ENCODE measurements at regions of chr20 and their contacts with region 1.

Region 1: GRCh38 chr20:46132705-46133120 is 14.6 kb downstream of the CD40 start:
- DNase-seq: peak; percentile 62
- H3K4me3 Mint-ChIP-seq: no peak overlapping the region
- H3K27ac Mint-ChIP-seq: no peak overlapping the region
- H3K4me1 Mint-ChIP-seq: no peaks in the 10 kb centered on the region
- H3K27me3 Mint-ChIP-seq: peaks cover 23% of the 10 kb centered on the region
- CTCF ChIP-seq: peak; percentile 90

Region 2: GRCh38 chr20:46040902-46041535 is 91.7 kb before region 1 on chr20:
- CTCF ChIA-PET with region 1: no interaction called
- POLR2A ChIA-PET with region 1: no interaction called
- intact Hi-C with region 1: no loop called
- DNase-seq: peak; percentile 57
- H3K4me3 Mint-ChIP-seq: no peak overlapping the region
- H3K27ac Mint-ChIP-seq: no peak overlapping the region
- H3K4me1 Mint-ChIP-seq: no peaks in the 10 kb centered on the region
- H3K27me3 Mint-ChIP-seq: peaks cover 81% of the 10 kb centered on the region
- CTCF ChIP-seq: no peak

Region 3: GRCh38 chr20:46117704-46118467 is 14.8 kb before region 1 on chr20 and contains the start of gene CD40:
- CTCF ChIA-PET with region 1: interaction called, 18 read pairs
- POLR2A ChIA-PET with region 1: no interaction called
- intact Hi-C with region 1: no loop called
- DNase-seq: peak; percentile 66
- H3K4me3 Mint-ChIP-seq: peak within 1 kb of the TSS; percentile 78
- H3K27ac Mint-ChIP-seq: no peak within 1 kb of the TSS
- H3K4me1 Mint-ChIP-seq: peaks cover 7% of the 10 kb centered on the region
- H3K27me3 Mint-ChIP-seq: peaks cover 11% of the 10 kb centered on the region
- CTCF ChIP-seq: no peak
- total RNA-seq, gene CD40: 1.5 and 2.3 TPM in 2 replicates

Region 4: DNA sequence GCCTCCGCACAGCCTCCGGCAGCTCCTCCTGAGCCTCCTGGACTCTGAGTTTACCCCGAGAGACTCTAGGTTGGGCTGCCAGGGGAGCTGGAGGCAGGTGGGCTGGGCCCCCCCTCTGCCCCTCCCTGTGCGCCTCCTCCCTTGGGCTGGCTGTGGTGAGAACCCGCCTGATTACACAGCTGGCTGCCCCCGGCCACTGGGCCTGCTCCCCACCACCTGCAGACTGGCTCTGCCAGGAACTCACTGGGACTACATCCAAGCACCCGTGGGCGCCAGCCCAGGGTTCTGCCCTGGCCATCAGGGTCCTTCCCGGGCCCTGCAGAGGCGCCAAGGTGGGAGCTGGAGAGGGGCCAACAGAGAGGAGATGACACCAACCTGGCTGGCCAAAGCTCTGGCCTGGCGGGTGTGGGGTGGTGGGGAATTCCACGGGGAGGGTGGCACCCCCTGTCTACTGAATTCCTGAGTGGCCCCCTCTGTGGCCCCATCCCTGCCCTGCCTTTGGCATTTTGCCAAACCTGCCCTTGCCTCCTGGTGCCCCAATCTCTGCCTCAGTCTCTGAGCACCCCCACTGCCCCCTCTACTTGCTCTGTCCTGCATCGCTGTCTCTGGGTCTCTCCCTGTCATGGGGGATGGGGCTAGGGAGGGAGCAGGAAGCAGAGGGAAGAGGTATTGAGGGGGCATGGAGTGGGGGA is 197.5 kb after region 1 on chr20:
- CTCF ChIA-PET with region 1: interaction called, 10 read pairs
- POLR2A ChIA-PET with region 1: no interaction called
- intact Hi-C with region 1: loop called (anchors 1 kb)
- DNase-seq: no peak
- H3K4me3 Mint-ChIP-seq: no peak overlapping the region
- H3K27ac Mint-ChIP-seq: no peak overlapping the region
- H3K4me1 Mint-ChIP-seq: peaks cover 17% of the 10 kb centered on the region
- H3K27me3 Mint-ChIP-seq: peaks cover 16% of the 10 kb centered on the region
- CTCF ChIP-seq: no peak

Region 5: GRCh38 chr20:46355778-46356177 is 223.1 kb after region 1 on chr20:
- CTCF ChIA-PET with region 1: interaction called, 17 read pairs
- POLR2A ChIA-PET with region 1: interaction called, 4 read pairs
- intact Hi-C with region 1: no loop called
- DNase-seq: no peak
- H3K4me3 Mint-ChIP-seq: no peak overlapping the region
- H3K27ac Mint-ChIP-seq: no peak overlapping the region
- H3K4me1 Mint-ChIP-seq: peaks cover 14% of the 10 kb centered on the region
- H3K27me3 Mint-ChIP-seq: no peaks in the 10 kb centered on the region
- CTCF ChIP-seq: no peak

Region 6: DNA sequence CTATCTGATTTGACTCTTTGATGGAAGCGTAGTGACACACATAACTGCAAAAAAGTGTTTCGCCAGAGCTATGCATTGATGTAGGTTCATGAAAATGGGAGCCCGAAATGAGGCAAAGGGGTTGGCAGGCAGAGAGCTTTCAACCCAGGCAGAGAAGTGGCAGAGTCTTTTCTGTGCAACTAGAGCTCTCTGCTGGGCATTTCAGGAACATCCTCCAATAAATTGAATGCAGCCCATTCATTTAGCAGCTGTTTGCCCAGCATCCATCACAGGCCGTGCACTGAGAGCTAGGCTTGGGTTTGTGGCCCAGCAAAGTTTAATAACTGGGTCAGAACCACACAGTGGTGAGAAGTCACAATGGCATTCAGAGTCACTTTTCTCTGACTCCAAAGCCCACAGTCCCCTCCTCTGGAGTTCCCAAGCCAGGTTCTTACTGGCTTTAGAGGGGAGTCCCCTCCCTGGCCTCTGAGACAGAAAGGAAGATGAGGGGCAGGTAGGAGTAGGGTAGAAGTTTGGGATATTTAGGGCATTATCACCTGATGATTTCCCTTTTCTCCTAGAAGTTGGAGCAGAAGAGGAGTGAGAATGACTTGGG is 305.5 kb after region 1 on chr20:
- CTCF ChIA-PET with region 1: interaction called, 18 read pairs
- POLR2A ChIA-PET with region 1: no interaction called
- intact Hi-C with region 1: loop called (anchors 1 kb)
- DNase-seq: peak; percentile 41
- H3K4me3 Mint-ChIP-seq: no peak overlapping the region
- H3K27ac Mint-ChIP-seq: no peak overlapping the region
- H3K4me1 Mint-ChIP-seq: peaks cover 10% of the 10 kb centered on the region
- H3K27me3 Mint-ChIP-seq: peaks cover 55% of the 10 kb centered on the region
- CTCF ChIP-seq: peak; percentile 39

Measured in MCF 10A (cell line).